Activated naive CD4-positive, alpha-beta T cell treated with anti-CD3 and anti-CD28 coated beads, Interleukin-2, amount 10 ng/mL, durations not matched to agents 7 days and 5 days (primary cell): ENCODE measurements at regions of chr2 and their contacts with region 1.

Region 1: DNA sequence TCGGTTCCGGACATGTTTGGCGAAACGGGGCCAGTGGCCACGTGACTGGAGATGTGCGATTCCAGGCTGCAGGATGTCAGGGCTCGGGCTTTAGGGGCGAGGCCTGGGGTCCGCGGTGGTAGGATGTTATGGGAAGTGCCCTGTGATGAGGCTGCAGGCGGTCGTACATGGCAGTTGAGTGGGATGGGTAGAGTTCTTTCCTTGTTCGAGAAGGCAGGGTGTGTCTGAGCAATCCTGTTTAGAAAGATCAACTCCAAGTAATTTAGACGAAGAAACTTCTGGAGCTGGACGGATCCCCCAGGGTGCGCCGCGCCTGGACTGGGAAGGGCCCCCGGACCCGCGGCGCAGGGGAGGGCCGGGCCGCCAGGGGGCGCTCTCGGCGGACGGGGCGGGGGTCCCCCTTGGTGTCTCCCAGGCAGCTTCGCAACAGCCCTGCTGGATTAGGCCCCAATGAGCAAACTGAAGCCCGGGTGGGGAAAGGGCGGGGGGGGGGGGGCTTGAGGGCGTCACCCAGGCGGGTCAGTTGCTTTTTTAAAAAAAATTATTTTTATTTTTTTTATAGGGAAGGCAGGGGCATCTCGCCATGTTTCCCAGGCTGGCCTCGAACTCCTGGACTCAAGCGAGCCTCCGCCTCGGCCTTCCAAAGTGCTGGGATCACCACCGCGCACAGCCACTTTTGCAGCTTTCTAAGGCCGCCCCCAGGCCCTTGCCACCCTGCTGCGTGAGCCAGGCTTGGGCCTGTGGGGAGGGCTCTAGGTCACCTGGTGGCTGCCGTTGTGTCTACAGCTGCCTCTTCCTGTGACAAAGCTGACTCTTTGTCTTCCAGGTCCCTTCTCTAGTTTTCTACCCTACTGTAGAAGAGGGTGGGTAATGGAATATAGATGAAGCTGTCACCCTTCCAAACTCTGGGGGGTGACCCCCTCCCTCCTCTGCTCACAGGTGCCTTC is 17.4 kb upstream of the SDC1 start:
- DNase-seq: no peak
- H3K4me3 Mint-ChIP-seq: peak overlapping the region; percentile 23
- H3K27ac Mint-ChIP-seq: peak overlapping the region; percentile 28
- H3K4me1 Mint-ChIP-seq: peaks cover 6% of the 10 kb centered on the region
- H3K27me3 Mint-ChIP-seq: peaks cover 22% of the 10 kb centered on the region

Region 2: GRCh38 chr2:20424300-20425290 is 182.3 kb after region 1 on chr2:
- CTCF ChIA-PET with region 1: interaction called, 11 read pairs
- DNase-seq: peak; percentile 49
- H3K4me3 Mint-ChIP-seq: no peak overlapping the region
- H3K27ac Mint-ChIP-seq: peak overlapping the region; percentile 85
- H3K4me1 Mint-ChIP-seq: peaks cover 26% of the 10 kb centered on the region
- H3K27me3 Mint-ChIP-seq: peaks cover 25% of the 10 kb centered on the region